Breast epithelium (tissue), 4 donors: ENCODE measurements at regions of chr11 and their contacts with region 1.

Region 1: DNA sequence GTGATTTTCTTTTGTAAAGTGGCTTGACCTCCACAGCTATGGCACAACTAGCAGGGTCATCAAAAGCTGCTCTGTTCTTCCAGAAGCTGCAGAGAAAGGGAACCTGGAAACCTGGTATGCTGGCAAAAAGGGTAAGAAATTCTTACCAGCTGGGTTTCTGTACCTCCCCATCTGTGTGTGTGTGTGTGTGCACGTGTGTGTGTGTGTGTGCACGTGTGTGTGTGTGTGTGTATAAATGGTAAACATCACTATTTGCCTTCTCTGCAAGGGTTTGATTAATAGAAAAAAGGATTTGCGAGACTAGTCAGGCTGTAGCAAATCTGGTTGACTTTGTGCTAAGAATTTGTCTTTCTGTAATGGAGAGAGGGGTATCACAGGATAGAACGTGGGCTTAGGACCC is 4.7 kb upstream of the MRPL17 start:
- DNase-seq: no peak
- H3K4me3 ChIP-seq: no peak overlapping the region
- H3K27ac ChIP-seq: no peak overlapping the region
- H3K4me1 ChIP-seq: no peaks in the 10 kb centered on the region
- H3K27me3 ChIP-seq: no peaks in the 10 kb centered on the region
- CTCF ChIP-seq: no peak
- POLR2A ChIP-seq: no peak

Region 2: DNA sequence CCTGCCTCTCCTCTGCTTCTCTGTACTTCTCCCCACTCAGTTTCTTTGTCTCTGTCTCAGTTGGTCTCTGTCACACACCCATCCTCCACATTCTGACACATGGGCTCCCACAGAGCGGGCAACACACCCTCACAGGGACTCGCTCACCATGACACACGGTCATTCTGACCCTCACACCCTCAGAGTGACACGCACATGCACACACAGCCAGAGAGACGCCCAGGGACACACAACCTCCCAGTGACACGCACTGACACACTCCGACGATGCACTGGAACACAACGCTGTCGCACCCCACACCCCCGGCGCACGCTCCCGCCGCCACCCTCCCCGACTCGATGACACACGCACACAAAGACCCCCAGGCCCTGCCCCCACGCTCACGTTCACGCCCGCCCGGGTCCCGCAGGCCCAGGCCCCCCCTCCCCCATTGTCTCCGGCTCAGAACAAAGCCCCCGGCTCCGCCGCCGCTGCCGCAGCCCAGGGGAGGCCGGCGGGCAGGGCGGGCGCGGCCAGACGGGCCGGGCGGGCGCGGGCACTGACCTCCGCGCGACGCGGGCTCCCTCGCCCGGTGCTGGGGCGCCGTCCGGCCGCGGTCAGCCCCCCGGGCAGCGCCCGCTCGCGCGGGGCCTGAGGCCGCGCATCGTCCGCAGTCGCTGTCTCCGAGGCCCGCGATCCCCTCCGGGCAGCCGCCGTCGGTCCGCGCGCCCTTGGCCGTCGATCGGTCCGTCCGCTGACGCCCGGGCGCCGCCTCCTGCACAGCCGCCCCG is 32.7 kb before region 1 on chr11:
- intact Hi-C with region 1: loop called (anchors 1 kb)
- DNase-seq: no peak
- H3K4me3 ChIP-seq: peak overlapping the region; percentile 51 to 85 (median 59)
- H3K27ac ChIP-seq: peak overlapping the region; percentile 60 to 92
- H3K4me1 ChIP-seq: no peaks in the 10 kb centered on the region
- H3K27me3 ChIP-seq: no peaks in the 10 kb centered on the region
- CTCF ChIP-seq: no peak
- POLR2A ChIP-seq: no peak